Psoas muscle (tissue), 8 donors: ENCODE measurements at regions of chr10 and their contacts with region 1.

Region 1: DNA sequence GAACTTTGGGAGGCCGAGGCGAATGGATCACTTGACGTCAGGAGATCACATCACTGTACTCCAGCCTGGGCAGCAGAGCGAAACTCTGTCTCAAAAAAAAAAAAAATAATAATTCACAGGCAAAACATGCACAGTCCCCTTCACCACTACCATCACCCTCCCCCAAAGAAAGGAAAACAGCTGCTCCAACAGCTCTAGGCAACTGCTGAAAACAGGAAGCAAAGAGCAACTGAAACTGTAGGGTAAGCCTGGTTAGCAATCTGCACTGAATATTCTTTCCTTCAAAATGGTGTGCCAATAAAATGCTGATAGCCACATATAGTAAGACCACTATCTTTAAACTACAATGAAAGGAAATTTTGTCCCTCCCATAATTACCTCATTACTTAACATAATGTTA is 11.8 kb downstream of the NT5C2 start:
- DNase-seq: no peak
- ATAC-seq: peak; percentile 35 to 56 (median 44)
- H3K4me3 ChIP-seq: no peak overlapping the region
- H3K27ac ChIP-seq: peak overlapping the region; percentile 67
- H3K4me1 ChIP-seq: peaks cover 65% of the 10 kb centered on the region
- H3K27me3 ChIP-seq: no peaks in the 10 kb centered on the region
- CTCF ChIP-seq: no peak

Region 2: GRCh38 chr10:103231047-103231551 is 49.9 kb after region 1 on chr10:
- intact Hi-C with region 1: loop called in 1 of 2 experiments (anchors 2 kb)
- DNase-seq: no peak
- ATAC-seq: peak in 3 of 4 donors; percentile 62 to 69 (median 62)
- H3K4me3 ChIP-seq: no peak overlapping the region
- H3K27ac ChIP-seq: peak overlapping the region; percentile 89
- H3K4me1 ChIP-seq: peaks cover 27% of the 10 kb centered on the region
- H3K27me3 ChIP-seq: no peaks in the 10 kb centered on the region
- CTCF ChIP-seq: no peak